ENCODE measurements at regions of chrX and their contacts with region 1.

Region 1: DNA sequence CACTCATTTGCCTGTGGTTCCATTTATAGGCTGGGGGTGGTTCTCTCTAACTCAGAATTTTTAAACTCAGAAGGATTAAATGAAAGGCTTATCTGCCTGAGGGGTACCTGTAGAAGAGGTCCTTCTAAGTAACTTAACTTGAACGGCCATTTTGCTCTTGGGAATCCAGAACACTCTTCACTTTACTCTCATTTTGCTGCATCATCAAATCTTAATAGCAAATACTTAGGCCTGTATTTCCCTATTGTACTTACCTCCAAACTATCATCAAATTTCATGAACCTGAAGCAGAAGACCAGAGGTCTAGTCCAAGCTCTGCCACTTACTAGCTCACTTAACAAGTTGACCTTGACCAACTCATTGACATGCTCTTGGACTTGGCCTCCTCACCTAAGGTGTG is 70.4 kb downstream of the GRIA3 start:
- DNase-seq: no peak

Region 2: GRCh38 chrX:123236859-123237258 is 17.6 kb before region 1 on chrX:
- intact Hi-C with region 1: no loop called
- DNase-seq: no peak

Region 3: DNA sequence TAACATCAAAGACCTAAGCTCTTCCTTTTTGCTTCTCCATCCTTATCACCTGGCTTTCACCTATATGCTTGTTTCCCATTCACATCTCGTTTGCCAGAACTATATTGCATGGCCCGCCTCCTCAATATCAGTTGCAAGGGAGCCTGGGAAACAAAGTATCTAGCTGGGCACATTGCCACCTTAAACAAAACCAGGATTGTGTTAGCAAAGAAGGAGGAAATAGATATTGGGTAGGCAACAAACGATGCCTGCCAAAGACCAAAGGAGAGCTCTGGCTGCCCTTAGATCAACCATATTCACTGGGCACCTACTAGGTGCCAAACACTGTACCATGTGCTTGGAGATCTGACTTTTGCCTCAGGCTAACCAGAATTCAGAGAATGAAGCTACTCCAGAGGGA is 37.2 kb after region 1 on chrX:
- intact Hi-C with region 1: loop called in 1 of 2 experiments (anchors 2 kb)
- DNase-seq: no peak

Region 4: GRCh38 chrX:124805486-124805885 is 1551.0 kb after region 1 on chrX:
- intact Hi-C with region 1: no loop called
- DNase-seq: no peak

Measured in posterior vena cava (tissue), 2 donors.